ENCODE measurements at regions of chr5 and their contacts with region 1.

Region 1: DNA sequence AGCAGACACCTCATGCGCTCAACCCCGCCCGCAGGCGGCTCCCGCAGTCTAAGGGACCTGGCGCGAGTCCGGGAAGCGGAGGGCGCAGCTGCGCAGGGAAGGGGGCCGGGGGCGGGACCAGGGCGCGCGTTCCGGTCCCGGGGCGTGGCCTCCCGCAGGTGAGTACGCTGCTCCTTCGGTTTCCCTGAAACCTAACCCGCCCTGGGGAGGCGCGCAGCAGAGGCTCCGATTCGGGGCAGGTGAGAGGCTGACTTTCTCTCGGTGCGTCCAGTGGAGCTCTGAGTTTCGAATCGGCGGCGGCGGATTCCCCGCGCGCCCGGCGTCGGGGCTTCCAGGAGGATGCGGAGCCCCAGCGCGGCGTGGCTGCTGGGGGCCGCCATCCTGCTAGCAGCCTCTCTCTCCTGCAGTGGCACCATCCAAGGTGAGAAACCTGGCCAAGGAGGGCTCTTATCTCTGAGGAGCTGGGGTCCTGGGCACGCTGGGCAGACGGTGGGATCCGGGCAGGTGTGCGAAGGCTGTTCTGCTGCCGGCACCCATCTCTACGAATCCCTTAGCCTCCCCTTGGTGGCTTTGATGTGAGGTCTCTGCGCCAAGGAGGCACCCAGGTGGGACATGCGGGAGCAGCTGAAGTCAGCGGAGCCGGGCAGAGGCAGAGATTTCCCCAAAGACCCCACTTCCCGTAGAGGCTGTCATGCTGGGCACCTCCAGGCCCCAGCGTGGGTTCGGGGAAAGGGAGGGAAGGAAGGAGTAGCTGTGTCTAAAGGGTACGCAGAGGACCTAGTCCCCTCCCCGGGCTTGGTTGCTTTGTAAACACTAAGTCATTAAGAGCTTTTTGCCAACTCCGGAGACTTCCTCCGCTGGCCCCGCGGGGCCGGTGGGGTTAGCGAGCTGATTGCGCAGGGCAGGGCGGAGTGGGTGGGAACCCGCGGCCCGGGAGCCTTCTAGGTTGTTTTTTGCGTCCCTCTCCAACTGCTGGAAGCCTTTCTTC is at the start of gene F2RL1:
- DNase-seq: peak; percentile 90
- ATAC-seq: peak; percentile 83
- H3K4me3 ChIP-seq: peak within 1 kb of the TSS; percentile 98 to 99
- H3K27ac ChIP-seq: peak within 1 kb of the TSS; percentile 91
- H3K4me1 ChIP-seq: peaks cover 47 to 79% of the 10 kb centered on the region in 2 experiments
- H3K27me3 ChIP-seq: no peaks in the 10 kb centered on the region
- CTCF ChIP-seq: no peak
- POLR2A ChIP-seq: peak; percentile 42
- RAD21 ChIP-seq: no peak
- total RNA-seq, gene F2RL1: 119 TPM

Region 2: GRCh38 chr5:76805850-76806505 is 13.2 kb before region 1 on chr5:
- CTCF ChIA-PET with region 1: interaction called, 10 read pairs
- POLR2A ChIA-PET with region 1: interaction called, 68 read pairs
- RAD21 ChIA-PET with region 1: no interaction called
- intact Hi-C with region 1: no loop called
- DNase-seq: peak; percentile 94
- ATAC-seq: peak; percentile 79
- H3K4me3 ChIP-seq: peak overlapping the region; percentile 17 to 24
- H3K27ac ChIP-seq: peak overlapping the region; percentile 72
- H3K4me1 ChIP-seq: peaks cover 53 to 95% of the 10 kb centered on the region in 2 experiments
- H3K27me3 ChIP-seq: no peaks in the 10 kb centered on the region
- CTCF ChIP-seq: no peak
- POLR2A ChIP-seq: no peak
- RAD21 ChIP-seq: peak; percentile 26; the same call in 1 of the 2 replicates

Region 3: DNA sequence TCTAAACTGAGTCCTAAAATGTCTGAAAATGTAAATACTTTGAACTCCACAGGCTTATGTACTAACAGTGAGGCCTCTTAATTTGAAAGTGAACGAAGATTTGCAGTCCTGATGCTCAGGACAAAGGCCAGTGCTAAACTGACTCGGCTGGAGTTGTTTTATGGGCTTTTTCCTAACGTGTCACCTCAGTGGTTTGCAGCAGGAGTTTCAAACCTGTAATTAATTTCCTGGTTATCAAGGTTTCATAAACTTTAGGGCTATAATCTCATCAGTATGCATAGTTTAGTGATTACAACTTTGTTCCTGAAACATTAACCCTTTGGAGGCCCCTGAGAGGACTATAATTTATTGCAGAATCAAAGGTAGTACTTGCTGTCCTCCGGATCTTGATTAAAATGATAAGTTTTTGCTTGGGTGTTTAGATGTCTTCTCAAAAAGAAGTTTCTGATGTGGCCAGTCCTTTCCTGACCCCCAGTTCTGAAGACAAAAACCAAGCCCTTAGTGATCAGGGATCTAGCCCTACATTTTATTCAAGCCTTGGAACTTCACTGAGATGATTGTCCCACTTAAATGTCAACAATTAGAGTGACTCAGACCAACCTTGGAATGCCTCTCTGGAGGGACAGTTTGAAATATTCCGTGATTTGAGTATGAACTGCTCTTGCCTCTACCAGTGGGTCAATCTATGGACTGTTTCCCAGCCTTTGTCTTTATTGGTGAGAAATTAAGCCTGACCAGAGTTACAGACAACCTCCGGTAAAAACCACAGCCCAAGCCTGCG is 19.5 kb after region 1 on chr5:
- CTCF ChIA-PET with region 1: no interaction called
- POLR2A ChIA-PET with region 1: interaction called, 14 read pairs
- RAD21 ChIA-PET with region 1: no interaction called
- intact Hi-C with region 1: loop called (anchors 1 kb)
- DNase-seq: peak; percentile 92
- ATAC-seq: peak; percentile 79
- H3K4me3 ChIP-seq: peak overlapping the region; percentile 3 to 30; a peak in 2 of 4 replicates
- H3K27ac ChIP-seq: peak overlapping the region; percentile 96
- H3K4me1 ChIP-seq: peaks cover 68 to 82% of the 10 kb centered on the region in 2 experiments
- H3K27me3 ChIP-seq: no peaks in the 10 kb centered on the region
- CTCF ChIP-seq: no peak
- POLR2A ChIP-seq: no peak
- RAD21 ChIP-seq: peak; percentile 15